Heart right ventricle (tissue), 16 donors: ENCODE measurements at regions of chr21 and their contacts with region 1.

Region 1: DNA sequence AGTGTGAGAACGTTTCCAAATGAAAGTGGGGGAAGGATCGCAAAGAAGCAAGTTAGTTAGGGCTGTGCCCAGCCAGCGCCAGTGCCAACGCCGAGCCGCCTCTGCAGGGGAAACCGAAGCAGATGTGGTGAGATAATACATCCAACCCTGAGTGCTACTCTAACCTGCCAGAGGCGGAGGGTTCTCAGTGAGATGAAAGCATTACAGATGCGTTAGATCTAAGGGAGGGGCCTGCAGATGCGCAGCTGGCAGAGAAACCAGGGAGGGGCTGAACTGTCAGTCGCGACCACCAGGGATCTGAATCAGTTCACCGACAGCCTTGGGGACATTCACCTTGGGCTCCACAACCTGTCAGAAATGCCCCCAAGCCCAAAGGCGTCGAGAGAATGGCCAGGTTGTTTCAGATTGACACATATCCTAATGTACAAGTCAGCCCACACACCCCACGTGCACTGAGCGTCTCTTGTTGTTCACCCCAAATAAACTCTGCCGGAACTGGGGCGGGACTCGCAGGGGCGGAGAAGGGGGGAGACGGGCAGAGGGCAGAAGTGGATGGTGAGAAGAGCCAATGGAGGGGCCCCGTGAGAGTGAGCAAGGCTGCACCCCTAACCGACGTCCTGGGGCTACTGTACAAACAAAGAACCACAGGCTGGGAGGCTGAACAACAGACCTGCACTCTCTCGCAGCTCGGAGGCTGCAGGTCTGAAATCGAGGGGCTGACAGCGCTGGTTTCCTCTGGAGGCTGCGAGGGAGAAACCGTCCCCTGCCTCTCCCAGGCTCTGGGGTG is 8.7 kb upstream of the UMODL1 start:
- DNase-seq: no peak
- ATAC-seq: peak in 7 of 8 donors; percentile 9 to 67 (median 47)
- H3K4me3 ChIP-seq: peak overlapping the region in 1 of 10 donors; percentile 35
- H3K27ac ChIP-seq: peak overlapping the region in 1 of 10 donors; percentile 57
- H3K4me1 ChIP-seq: peaks cover 0 to 42% (median 2%) of the 10 kb centered on the region in 9 donors
- H3K27me3 ChIP-seq: peaks cover 0 to 59% (median 25%) of the 10 kb centered on the region in 7 donors
- CTCF ChIP-seq: no peak

Region 2: GRCh38 chr21:41520575-41521442 is 541.6 kb before region 1 on chr21:
- intact Hi-C with region 1: no loop called
- DNase-seq: no peak
- ATAC-seq: no peak
- H3K4me3 ChIP-seq: no peak overlapping the region
- H3K27ac ChIP-seq: no peak overlapping the region
- H3K4me1 ChIP-seq: no peaks in the 10 kb centered on the region
- H3K27me3 ChIP-seq: peaks cover 0 to 12% (median 5%) of the 10 kb centered on the region in 7 donors
- CTCF ChIP-seq: no peak

Region 3: GRCh38 chr21:43816611-43817478 is 1754.4 kb after region 1 on chr21:
- intact Hi-C with region 1: loop called in 1 of 10 experiments (anchors 5 kb)
- DNase-seq: no peak
- ATAC-seq: peak in 1 of 8 donors; percentile 38
- H3K4me3 ChIP-seq: no peak overlapping the region
- H3K27ac ChIP-seq: no peak overlapping the region
- H3K4me1 ChIP-seq: peaks cover 0 to 42% (median 0%) of the 10 kb centered on the region in 9 donors
- H3K27me3 ChIP-seq: no peaks in the 10 kb centered on the region
- CTCF ChIP-seq: no peak